ENCODE measurements at regions of chr4 and their contacts with region 1.

Region 1: GRCh38 chr4:121656269-121656641 is 40.5 kb downstream of the ANXA5 start:
- DNase-seq: peak; percentile 62
- ATAC-seq: peak; percentile 69
- H3K4me3 ChIP-seq: no peak overlapping the region
- H3K27ac ChIP-seq: no peak overlapping the region
- H3K4me1 ChIP-seq: no peaks in the 10 kb centered on the region
- H3K27me3 ChIP-seq: no peaks in the 10 kb centered on the region
- CTCF ChIP-seq: peak; percentile 59

Region 2: DNA sequence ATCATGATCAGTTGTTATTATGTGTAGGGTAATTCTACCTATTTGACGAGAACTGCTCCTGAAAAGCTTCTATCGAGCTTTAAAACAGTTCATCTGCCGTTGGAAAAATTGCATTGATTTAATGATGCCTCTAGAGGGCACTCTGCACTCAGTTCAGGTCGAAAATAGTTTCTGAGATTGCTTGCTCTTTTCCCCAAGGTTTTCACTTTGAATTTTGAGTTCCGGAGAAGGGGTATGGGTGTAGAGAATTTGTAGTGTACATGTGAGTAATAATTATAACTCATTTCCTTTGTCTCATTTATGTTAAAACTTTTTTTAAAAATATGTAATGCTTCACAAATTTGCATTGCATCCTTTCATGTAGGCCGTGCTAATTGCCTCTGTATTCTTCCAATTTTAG is 463.8 kb before region 1 on chr4:
- CTCF ChIA-PET with region 1: no interaction called
- POLR2A ChIA-PET with region 1: no interaction called
- intact Hi-C with region 1: loop called (anchors 2 kb)
- DNase-seq: peak; percentile 51
- ATAC-seq: no peak
- H3K4me3 ChIP-seq: no peak overlapping the region
- H3K27ac ChIP-seq: no peak overlapping the region
- H3K4me1 ChIP-seq: no peaks in the 10 kb centered on the region
- H3K27me3 ChIP-seq: peaks cover 5% of the 10 kb centered on the region; the same call in 1 of the 2 replicates
- CTCF ChIP-seq: peak; percentile 75

Region 3: DNA sequence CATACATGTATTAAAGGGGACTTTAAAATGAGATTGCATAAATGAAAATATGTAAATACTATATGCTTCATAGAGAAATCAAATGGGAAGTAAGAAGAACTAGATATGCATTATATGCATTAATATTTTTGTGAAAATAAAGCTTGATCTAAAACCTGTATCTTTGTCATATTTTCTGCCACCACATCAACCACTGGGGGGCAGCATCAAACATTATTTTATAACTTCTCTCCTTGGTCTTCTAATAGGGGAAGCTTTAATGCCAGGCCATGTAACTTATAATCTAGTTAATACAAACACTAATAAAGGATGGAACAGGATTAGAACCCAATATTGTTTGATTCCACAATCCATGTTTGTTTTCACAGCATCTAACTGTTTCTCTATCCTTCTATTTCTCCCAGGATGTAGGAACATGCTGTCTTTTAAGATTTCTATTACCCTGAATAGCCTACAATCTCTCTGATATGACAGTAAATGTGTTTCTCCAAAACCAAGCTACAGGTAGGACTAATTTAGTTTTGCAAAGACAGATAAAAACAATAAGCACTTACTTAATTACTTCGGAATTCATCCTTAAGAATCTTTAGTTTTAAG is 285.4 kb before region 1 on chr4:
- CTCF ChIA-PET with region 1: no interaction called
- POLR2A ChIA-PET with region 1: no interaction called
- intact Hi-C with region 1: loop called (anchors 1 kb)
- DNase-seq: peak; percentile 59
- ATAC-seq: no peak; the same call in 1 of the 2 replicates
- H3K4me3 ChIP-seq: no peak overlapping the region
- H3K27ac ChIP-seq: no peak overlapping the region
- H3K4me1 ChIP-seq: no peaks in the 10 kb centered on the region
- H3K27me3 ChIP-seq: no peaks in the 10 kb centered on the region
- CTCF ChIP-seq: peak; percentile 70

Region 4: GRCh38 chr4:121462660-121463261 is 193.5 kb before region 1 on chr4:
- CTCF ChIA-PET with region 1: interaction called, 4 read pairs
- POLR2A ChIA-PET with region 1: no interaction called
- intact Hi-C with region 1: loop called (anchors 1 kb)
- DNase-seq: peak; percentile 73
- ATAC-seq: peak; percentile 78
- H3K4me3 ChIP-seq: no peak overlapping the region
- H3K27ac ChIP-seq: no peak overlapping the region
- H3K4me1 ChIP-seq: no peaks in the 10 kb centered on the region
- H3K27me3 ChIP-seq: peaks cover 16% of the 10 kb centered on the region
- CTCF ChIP-seq: peak; percentile 74

Region 5: GRCh38 chr4:121484633-121485032 is 171.6 kb before region 1 on chr4:
- CTCF ChIA-PET with region 1: no interaction called
- POLR2A ChIA-PET with region 1: no interaction called
- intact Hi-C with region 1: loop called (anchors 1 kb)
- DNase-seq: peak; percentile 60
- ATAC-seq: peak; percentile 88
- H3K4me3 ChIP-seq: no peak overlapping the region
- H3K27ac ChIP-seq: no peak overlapping the region
- H3K4me1 ChIP-seq: no peaks in the 10 kb centered on the region
- H3K27me3 ChIP-seq: no peaks in the 10 kb centered on the region
- CTCF ChIP-seq: peak; percentile 75

Measured in PC-3 (cell line).